Panc1 (cell line): ENCODE measurements at regions of chr7 and their contacts with region 1.

Region 1: DNA sequence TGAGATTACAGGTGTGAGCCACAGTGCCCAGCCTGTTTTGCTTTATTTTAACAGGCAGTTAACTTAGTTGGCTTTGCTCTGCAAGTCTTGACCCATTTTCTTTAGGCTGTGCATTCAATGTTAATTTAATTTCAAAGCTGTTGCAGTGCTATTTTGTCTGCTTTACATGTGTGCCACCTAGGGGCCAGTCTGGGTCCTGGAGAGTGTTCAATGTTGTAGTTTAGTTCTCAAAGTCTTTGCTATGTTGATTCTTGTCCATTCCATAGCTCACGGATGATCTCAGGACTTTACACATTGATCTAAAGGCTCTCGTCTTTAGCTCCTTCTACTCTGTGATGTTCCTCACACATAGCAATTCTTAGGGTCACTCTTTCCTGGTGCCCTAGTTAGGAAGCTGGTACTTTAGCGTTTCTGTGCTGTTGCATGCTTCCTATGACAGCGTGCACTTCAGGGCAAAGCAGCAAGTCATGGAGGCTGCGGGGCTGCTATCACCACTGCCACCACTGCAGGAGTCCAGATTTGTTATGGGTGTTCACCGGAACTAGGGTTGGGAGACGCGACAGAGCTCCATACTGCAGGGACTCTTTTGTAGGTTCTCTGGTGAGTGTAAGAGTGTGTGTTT is 16.4 kb upstream of the ABCA13 start:
- DNase-seq: peak; percentile 54
- ATAC-seq: peak; percentile 96
- H3K4me3 ChIP-seq: no peak overlapping the region
- H3K27ac ChIP-seq: peak overlapping the region; percentile 71; the same call in 1 of the 2 replicates
- H3K4me1 ChIP-seq: peaks cover 4% of the 10 kb centered on the region; the same call in 1 of the 2 replicates
- H3K27me3 ChIP-seq: no peaks in the 10 kb centered on the region
- CTCF ChIP-seq: peak; percentile 90

Region 2: DNA sequence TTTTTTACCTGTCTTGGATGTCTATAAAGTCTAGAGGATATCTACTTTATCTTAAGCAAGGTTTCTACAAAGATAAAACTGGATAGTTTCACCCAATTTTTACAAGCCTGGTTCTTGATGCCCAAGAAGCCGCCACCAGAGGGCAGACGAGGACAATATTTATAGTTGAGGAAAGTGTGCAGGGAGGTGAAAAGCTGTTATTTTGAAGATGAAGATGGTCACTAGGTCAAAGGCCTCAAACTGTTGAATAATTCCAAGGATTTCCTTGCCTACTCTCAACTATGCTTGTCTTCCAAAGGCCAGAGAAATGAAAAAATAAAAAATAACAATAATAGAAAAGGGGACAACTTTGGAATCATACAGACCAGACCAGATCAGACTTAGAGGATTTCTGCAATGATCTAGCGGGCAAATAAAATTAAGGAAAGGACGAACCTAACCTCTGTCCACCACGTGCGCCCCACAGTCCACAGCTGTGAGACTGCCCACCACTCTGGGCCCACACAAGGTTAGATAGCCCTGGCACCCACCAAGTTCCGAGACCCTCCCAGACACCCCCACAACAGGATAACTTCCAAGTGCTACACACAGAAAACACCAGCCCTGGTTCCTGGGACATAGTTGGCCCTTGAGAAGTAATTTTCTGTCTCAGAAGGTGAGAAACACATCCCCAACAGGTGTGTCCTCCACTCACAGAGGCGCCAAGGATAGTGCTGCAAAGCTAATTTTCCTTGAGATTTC is 209.5 kb before region 1 on chr7:
- CTCF ChIA-PET with region 1: interaction called, 17 read pairs
- POLR2A ChIA-PET with region 1: no interaction called
- in situ Hi-C with region 1: no loop called
- intact Hi-C with region 1: loop called (anchors 2 kb)
- DNase-seq: peak; percentile 22
- ATAC-seq: peak; percentile 82
- H3K4me3 ChIP-seq: no peak overlapping the region
- H3K27ac ChIP-seq: peak overlapping the region; percentile 76
- H3K4me1 ChIP-seq: peaks cover 29% of the 10 kb centered on the region
- H3K27me3 ChIP-seq: no peaks in the 10 kb centered on the region
- CTCF ChIP-seq: peak; percentile 89

Region 3: GRCh38 chr7:48109848-48110663 is 44.8 kb before region 1 on chr7:
- CTCF ChIA-PET with region 1: interaction called, 9 read pairs
- POLR2A ChIA-PET with region 1: interaction called, 3 read pairs
- in situ Hi-C with region 1: no loop called
- intact Hi-C with region 1: loop called (anchors 2 kb)
- DNase-seq: peak; percentile 90
- ATAC-seq: peak; percentile 77
- H3K4me3 ChIP-seq: no peak overlapping the region
- H3K27ac ChIP-seq: peak overlapping the region; percentile 55
- H3K4me1 ChIP-seq: peaks cover 50% of the 10 kb centered on the region
- H3K27me3 ChIP-seq: no peaks in the 10 kb centered on the region
- CTCF ChIP-seq: peak; percentile 100

Region 4: DNA sequence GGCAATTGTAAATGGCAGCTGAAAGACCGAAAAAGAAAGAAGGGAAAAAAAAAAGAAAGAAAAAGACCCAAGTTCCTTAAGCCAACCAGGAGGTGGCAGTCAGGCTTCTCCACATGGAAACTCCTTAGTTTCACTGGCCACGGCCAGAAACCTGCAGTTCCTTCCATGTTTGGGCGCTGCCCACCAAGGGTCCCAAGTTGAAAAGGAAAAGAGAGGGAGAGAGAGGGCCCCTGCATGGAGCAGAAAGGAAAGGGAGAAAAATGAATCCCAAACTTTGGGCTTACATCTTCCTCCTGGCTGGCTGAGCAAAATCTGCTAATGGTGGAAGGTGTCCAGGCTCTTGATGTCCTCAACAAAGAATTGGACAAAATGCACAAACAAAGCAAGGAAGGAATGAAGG is 15.4 kb before region 1 on chr7:
- CTCF ChIA-PET with region 1: interaction called, 15 read pairs
- POLR2A ChIA-PET with region 1: no interaction called
- in situ Hi-C with region 1: no loop called
- intact Hi-C with region 1: no loop called
- DNase-seq: no peak
- ATAC-seq: peak; percentile 39
- H3K4me3 ChIP-seq: peak overlapping the region in 1 of 2 experiments; percentile 12; a peak in 2 of 4 replicates
- H3K27ac ChIP-seq: peak overlapping the region; percentile 98
- H3K4me1 ChIP-seq: peaks cover 52% of the 10 kb centered on the region
- H3K27me3 ChIP-seq: no peaks in the 10 kb centered on the region
- CTCF ChIP-seq: peak; percentile 85

Region 5: DNA sequence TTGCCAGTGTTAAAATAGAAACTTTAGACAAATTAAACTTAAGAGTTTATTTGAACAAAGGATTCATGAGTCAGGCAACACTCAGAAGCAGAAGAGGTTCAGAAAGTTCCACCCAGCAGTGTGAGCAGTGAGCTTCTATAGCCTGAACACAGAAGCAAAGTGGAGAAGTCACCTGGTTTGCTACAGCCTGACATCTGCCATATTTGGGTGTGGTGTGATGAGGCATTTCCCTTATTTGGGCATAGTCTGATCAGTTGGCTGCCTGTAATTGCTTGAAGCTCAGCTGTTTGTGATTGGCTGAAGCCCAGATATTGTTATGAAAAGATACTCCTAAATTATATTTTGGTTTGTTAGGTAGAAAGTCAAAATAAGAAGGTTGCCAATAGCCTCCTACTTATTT is 1657.6 kb after region 1 on chr7:
- CTCF ChIA-PET with region 1: no interaction called
- POLR2A ChIA-PET with region 1: no interaction called
- in situ Hi-C with region 1: no loop called
- intact Hi-C with region 1: no loop called
- DNase-seq: no peak
- ATAC-seq: no peak
- H3K4me3 ChIP-seq: no peak overlapping the region
- H3K27ac ChIP-seq: no peak overlapping the region
- H3K4me1 ChIP-seq: no peaks in the 10 kb centered on the region
- H3K27me3 ChIP-seq: no peaks in the 10 kb centered on the region
- CTCF ChIP-seq: no peak